ENCODE measurements at regions of chr17 and their contacts with region 1.

Region 1: GRCh38 chr17:14300575-14301278 is at the start of gene HS3ST3B1:
- DNase-seq: peak; percentile 98 to 100 (median 99)
- ATAC-seq: peak; percentile 87
- H3K4me3 ChIP-seq: peak within 1 kb of the TSS; percentile 80 to 92
- H3K4me3 Mint-ChIP-seq: peak within 1 kb of the TSS; percentile 97
- H3K27ac ChIP-seq: peak within 1 kb of the TSS; percentile 72 to 88
- H3K27ac Mint-ChIP-seq: peak within 1 kb of the TSS; percentile 96
- H3K4me1 ChIP-seq: peaks cover 51% of the 10 kb centered on the region
- H3K4me1 Mint-ChIP-seq: peaks cover 57% of the 10 kb centered on the region
- H3K27me3 ChIP-seq: peaks cover 13 to 23% of the 10 kb centered on the region in 2 experiments
- H3K27me3 Mint-ChIP-seq: peaks cover 32% of the 10 kb centered on the region
- CTCF ChIP-seq: peak; percentile 16
- total RNA-seq, gene HS3ST3B1: 8.1 to 8.4 TPM

Region 2: DNA sequence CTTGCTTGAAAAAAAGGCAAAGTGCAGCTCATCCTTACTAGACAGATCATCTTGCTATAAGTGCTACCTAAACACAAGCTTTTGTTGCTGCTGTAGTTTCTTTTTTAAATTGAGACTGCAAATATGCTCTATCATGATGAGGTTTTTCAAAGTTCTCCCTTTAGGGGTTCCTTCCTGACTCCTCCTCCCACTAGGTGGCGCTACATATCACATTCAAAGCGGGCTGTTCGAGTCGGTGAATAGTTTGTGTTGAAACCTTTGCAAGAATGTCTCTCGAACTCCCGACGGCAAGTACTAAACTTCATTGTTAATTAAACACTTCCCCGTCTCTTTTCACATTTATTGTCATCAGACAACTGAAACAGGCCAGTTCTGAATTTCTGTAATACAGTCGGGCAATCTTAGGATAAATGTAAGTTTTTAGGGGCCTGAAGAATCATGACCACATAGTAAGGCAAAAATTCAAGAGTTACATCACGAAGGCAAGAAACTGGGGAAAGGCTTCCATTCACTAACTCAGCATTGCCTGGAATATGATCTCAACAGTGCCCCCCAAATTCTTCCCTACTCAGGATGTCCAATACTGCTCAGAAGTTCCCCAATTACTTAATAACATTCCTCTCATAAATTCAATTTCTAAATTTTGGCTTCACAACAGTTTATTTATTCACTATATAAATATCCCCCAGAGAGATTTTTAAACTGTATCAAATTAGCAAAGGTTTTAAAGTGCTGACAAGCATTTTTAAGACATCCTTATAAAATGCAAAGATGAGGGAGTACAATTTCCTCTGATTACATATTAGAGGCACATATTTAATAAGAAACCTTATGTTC is 705.7 kb before region 1 on chr17:
- CTCF ChIA-PET with region 1: interaction called, 15 read pairs
- POLR2A ChIA-PET with region 1: no interaction called
- intact Hi-C with region 1: loop called in 1 of 2 experiments (anchors 1 kb)
- DNase-seq: peak; percentile 59 to 91 (median 82)
- ATAC-seq: peak; percentile 56
- H3K4me3 ChIP-seq: no peak overlapping the region
- H3K4me3 Mint-ChIP-seq: no peak overlapping the region
- H3K27ac ChIP-seq: no peak overlapping the region
- H3K27ac Mint-ChIP-seq: no peak overlapping the region
- H3K4me1 ChIP-seq: no peaks in the 10 kb centered on the region
- H3K4me1 Mint-ChIP-seq: peaks cover 6% of the 10 kb centered on the region
- H3K27me3 ChIP-seq: peaks cover 0 to 4% of the 10 kb centered on the region in 2 experiments
- H3K27me3 Mint-ChIP-seq: peaks cover 24% of the 10 kb centered on the region
- CTCF ChIP-seq: peak; percentile 92

Region 3: DNA sequence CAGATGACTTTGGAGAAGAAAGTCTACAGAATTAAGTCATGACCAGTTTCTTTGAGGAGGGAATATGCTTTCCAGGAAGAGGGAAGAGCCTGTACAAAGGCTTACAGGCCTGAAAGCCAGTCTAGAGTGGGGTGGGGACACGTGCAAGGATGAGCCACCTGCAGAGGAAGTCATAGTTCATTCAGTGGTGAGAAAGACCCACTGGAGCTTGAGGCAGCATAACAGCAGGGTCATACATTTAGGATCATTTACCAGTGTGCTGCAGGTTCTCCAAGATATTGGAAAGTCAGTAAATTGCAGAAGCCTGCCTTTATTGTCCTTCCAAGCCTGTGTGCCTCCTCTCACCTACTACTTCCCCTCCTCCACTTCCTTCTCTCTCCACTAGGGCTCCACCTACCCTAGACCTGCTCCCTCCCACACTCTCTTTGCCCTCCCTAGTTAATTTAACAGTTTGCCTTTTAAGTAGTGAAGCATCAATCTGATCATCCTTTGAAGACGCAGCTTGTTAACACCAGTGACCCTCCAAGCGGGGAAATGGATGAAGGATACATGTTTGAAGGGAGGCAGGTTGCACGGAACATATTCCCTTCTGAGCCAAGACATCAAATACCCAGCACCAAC is 104.2 kb before region 1 on chr17:
- CTCF ChIA-PET with region 1: interaction called, 21 read pairs
- POLR2A ChIA-PET with region 1: interaction called, 74 read pairs
- intact Hi-C with region 1: loop called in 1 of 2 experiments (anchors 1 kb)
- DNase-seq: peak in 2 of 9 experiments; percentile 37 to 51
- ATAC-seq: no peak
- H3K4me3 ChIP-seq: peak overlapping the region in 1 of 2 experiments; percentile 29
- H3K4me3 Mint-ChIP-seq: peak overlapping the region; percentile 64
- H3K27ac ChIP-seq: peak overlapping the region in 1 of 2 experiments; percentile 59
- H3K27ac Mint-ChIP-seq: peak overlapping the region; percentile 96
- H3K4me1 ChIP-seq: peaks cover 95% of the 10 kb centered on the region
- H3K4me1 Mint-ChIP-seq: peaks cover 86% of the 10 kb centered on the region
- H3K27me3 ChIP-seq: no peaks in the 10 kb centered on the region
- H3K27me3 Mint-ChIP-seq: no peaks in the 10 kb centered on the region
- CTCF ChIP-seq: peak; percentile 38

Region 4: GRCh38 chr17:14359163-14360020 is 58.7 kb after region 1 on chr17:
- CTCF ChIA-PET with region 1: interaction called, 3 read pairs
- POLR2A ChIA-PET with region 1: no interaction called
- intact Hi-C with region 1: loop called in 1 of 2 experiments (anchors 10 kb)
- DNase-seq: peak in 8 of 9 experiments; percentile 1 to 88 (median 46)
- ATAC-seq: peak; percentile 91
- H3K4me3 ChIP-seq: no peak overlapping the region
- H3K4me3 Mint-ChIP-seq: no peak overlapping the region
- H3K27ac ChIP-seq: no peak overlapping the region
- H3K27ac Mint-ChIP-seq: no peak overlapping the region
- H3K4me1 ChIP-seq: peaks cover 14% of the 10 kb centered on the region
- H3K4me1 Mint-ChIP-seq: peaks cover 15% of the 10 kb centered on the region
- H3K27me3 ChIP-seq: no peaks in the 10 kb centered on the region
- H3K27me3 Mint-ChIP-seq: no peaks in the 10 kb centered on the region
- CTCF ChIP-seq: no peak

Region 5: DNA sequence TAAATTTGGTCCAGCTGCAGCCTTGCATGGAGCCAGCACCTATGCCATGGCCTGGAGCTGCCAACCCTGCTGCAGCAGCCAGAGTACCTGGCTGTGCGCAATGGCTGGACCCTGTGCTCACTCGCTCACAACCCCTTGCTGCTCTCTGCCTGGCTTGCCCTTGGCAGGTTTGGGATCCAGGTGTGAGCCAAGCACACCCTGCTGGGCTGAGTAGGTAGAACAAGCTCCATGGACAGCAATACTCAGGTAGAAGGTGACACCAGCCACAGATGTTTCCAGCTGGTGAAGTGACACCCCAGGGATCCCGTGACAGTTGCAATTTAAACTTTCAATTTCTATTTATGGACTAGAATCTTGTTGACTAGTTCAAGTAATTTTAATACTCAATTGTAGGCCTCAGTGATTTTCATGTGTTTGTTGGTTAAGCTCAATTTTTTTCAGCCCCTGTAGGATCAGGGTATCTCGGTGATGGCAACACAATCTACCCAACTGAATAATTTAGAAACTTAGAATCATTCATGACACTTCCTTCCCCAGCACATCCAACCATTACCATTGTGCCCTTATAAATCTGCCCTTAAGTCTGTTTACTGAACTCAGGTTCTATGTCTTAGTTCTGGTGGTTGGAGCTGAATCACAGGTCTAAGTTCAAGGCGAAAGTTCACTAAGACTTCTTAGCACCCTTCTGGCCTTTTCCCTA is 484.4 kb after region 1 on chr17:
- CTCF ChIA-PET with region 1: interaction called, 8 read pairs
- POLR2A ChIA-PET with region 1: no interaction called
- intact Hi-C with region 1: loop called (anchors 2 to 10 kb)
- DNase-seq: peak; percentile 3 to 60 (median 33)
- ATAC-seq: peak; percentile 62
- H3K4me3 ChIP-seq: no peak overlapping the region
- H3K4me3 Mint-ChIP-seq: no peak overlapping the region
- H3K27ac ChIP-seq: no peak overlapping the region
- H3K27ac Mint-ChIP-seq: no peak overlapping the region
- H3K4me1 ChIP-seq: no peaks in the 10 kb centered on the region
- H3K4me1 Mint-ChIP-seq: no peaks in the 10 kb centered on the region
- H3K27me3 ChIP-seq: no peaks in the 10 kb centered on the region
- H3K27me3 Mint-ChIP-seq: peaks cover 2% of the 10 kb centered on the region
- CTCF ChIP-seq: peak; percentile 16